CD4-positive, alpha-beta T cell (primary cell): ENCODE measurements at regions of chr11 and their contacts with region 1.

Region 1: DNA sequence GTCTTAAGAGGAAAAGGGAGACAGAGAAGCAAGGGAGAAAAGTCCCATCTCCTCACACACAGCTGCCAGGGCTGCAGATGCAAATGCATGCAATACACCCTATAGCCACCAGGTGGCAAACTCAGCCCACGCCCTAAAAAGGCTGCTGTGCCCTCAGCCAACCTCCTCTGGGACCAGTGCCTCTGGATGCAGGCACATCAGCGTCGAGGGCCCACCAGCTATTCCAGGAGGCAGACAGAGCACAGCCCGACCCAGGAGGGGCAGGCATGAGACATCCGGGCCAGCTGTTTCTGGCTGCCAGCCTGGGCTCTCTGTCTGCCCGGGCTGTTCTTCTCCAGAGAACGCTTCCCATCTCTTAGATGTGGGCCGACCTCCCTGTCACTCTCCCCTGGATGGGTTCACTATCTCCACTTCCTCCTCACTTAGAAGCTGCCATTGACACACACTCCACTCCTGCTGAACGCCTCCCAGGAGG is 39.7 kb downstream of the TPBGL start:
- DNase-seq: peak; percentile 62 to 87 (median 74)
- ATAC-seq: peak; percentile 51
- H3K4me3 ChIP-seq: no peak overlapping the region
- H3K4me3 Mint-ChIP-seq: peak overlapping the region; percentile 62
- H3K27ac ChIP-seq: no peak overlapping the region
- H3K27ac Mint-ChIP-seq: peak overlapping the region; percentile 87
- H3K4me1 ChIP-seq: peaks cover 50% of the 10 kb centered on the region
- H3K4me1 Mint-ChIP-seq: peaks cover 51% of the 10 kb centered on the region
- H3K27me3 ChIP-seq: no peaks in the 10 kb centered on the region
- H3K27me3 Mint-ChIP-seq: no peaks in the 10 kb centered on the region
- CTCF ChIP-seq: peak; percentile 95

Region 2: DNA sequence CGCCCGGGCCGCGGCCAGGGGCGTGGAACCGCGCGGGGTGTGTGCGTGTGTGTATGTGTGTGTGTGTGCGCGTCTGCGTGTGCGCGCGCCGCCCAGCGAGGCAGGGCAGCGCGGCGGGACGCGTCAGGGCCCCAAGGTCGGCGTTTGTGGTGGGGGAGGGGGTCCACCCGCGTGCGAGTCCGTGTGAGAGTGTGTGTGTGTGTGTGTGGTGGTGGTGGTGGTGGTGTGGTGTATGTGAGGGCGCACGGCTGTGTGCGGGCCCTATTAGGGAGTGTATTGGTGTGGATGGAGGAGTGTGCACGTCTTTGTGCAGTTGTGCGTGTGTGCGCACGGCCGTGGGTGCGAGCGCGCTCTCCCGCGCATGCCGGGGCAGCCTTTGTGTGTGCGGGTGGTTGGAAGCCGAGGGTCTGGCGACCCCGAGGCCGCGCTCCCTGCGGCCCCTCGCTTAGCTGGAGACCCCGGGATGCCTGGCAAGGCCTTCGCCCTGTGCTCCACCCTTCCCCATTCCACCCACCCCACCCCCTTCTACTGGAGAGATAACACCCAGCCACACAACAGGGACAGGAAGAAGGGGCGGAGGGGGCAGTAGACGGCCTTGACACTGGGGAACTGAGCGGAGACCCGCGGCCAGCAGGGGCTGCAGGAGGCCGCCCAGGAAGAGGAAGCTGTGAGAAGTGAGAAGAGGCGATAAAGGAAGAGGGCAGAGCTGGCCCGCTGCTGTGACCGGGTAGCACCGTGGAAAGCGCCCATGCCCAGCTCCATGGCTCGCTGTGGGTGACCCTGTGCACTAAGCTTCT is 71.7 kb after region 1 on chr11:
- CTCF ChIA-PET with region 1: interaction called, 5 read pairs
- POLR2A ChIA-PET with region 1: interaction called, 66 read pairs
- intact Hi-C with region 1: loop called in 1 of 2 experiments (anchors 2 kb)
- DNase-seq: peak; percentile 37 to 90 (median 58)
- ATAC-seq: peak; percentile 64
- H3K4me3 ChIP-seq: peak overlapping the region; percentile 74
- H3K4me3 Mint-ChIP-seq: peak overlapping the region; percentile 98
- H3K27ac ChIP-seq: peak overlapping the region; percentile 59 to 68
- H3K27ac Mint-ChIP-seq: peak overlapping the region; percentile 91
- H3K4me1 ChIP-seq: peaks cover 59% of the 10 kb centered on the region
- H3K4me1 Mint-ChIP-seq: peaks cover 68% of the 10 kb centered on the region
- H3K27me3 ChIP-seq: no peaks in the 10 kb centered on the region
- H3K27me3 Mint-ChIP-seq: no peaks in the 10 kb centered on the region
- CTCF ChIP-seq: no peak

Region 3: GRCh38 chr11:75380711-75381420 is 100.6 kb after region 1 on chr11:
- CTCF ChIA-PET with region 1: interaction called, 49 read pairs
- POLR2A ChIA-PET with region 1: interaction called, 33 read pairs
- intact Hi-C with region 1: loop called (anchors 1 kb)
- DNase-seq: peak in 2 of 14 experiments; percentile 40 to 44
- ATAC-seq: no peak
- H3K4me3 ChIP-seq: no peak overlapping the region
- H3K4me3 Mint-ChIP-seq: no peak overlapping the region
- H3K27ac ChIP-seq: no peak overlapping the region
- H3K27ac Mint-ChIP-seq: peak overlapping the region; percentile 7
- H3K4me1 ChIP-seq: peaks cover 24% of the 10 kb centered on the region
- H3K4me1 Mint-ChIP-seq: peaks cover 20% of the 10 kb centered on the region
- H3K27me3 ChIP-seq: no peaks in the 10 kb centered on the region
- H3K27me3 Mint-ChIP-seq: no peaks in the 10 kb centered on the region
- CTCF ChIP-seq: no peak

Region 4: GRCh38 chr11:76680518-76681425 is 1400.5 kb after region 1 on chr11:
- CTCF ChIA-PET with region 1: no interaction called
- POLR2A ChIA-PET with region 1: no interaction called
- intact Hi-C with region 1: no loop called
- DNase-seq: peak; percentile 23 to 73 (median 40)
- ATAC-seq: peak; percentile 52
- H3K4me3 ChIP-seq: no peak overlapping the region
- H3K4me3 Mint-ChIP-seq: no peak overlapping the region
- H3K27ac ChIP-seq: no peak overlapping the region
- H3K27ac Mint-ChIP-seq: no peak overlapping the region
- H3K4me1 ChIP-seq: peaks cover 8% of the 10 kb centered on the region
- H3K4me1 Mint-ChIP-seq: no peaks in the 10 kb centered on the region
- H3K27me3 ChIP-seq: no peaks in the 10 kb centered on the region
- H3K27me3 Mint-ChIP-seq: peaks cover 5% of the 10 kb centered on the region
- CTCF ChIP-seq: peak; percentile 58